Caco-2 (cell line): ENCODE measurements at regions of chr11 and their contacts with region 1.

Region 1: GRCh38 chr11:19101796-19102520 is 15.0 kb upstream of the ZDHHC13 start:
- DNase-seq: peak in 1 of 2 experiments; percentile 30
- H3K4me3 ChIP-seq: no peak overlapping the region; the same call in 1 of the 2 replicates
- H3K4me3 Mint-ChIP-seq: peak overlapping the region; percentile 39
- H3K27ac Mint-ChIP-seq: no peak overlapping the region
- H3K4me1 ChIP-seq: peaks cover 17% of the 10 kb centered on the region
- H3K4me1 Mint-ChIP-seq: peaks cover 24% of the 10 kb centered on the region
- H3K27me3 ChIP-seq: no peaks in the 10 kb centered on the region
- H3K27me3 Mint-ChIP-seq: peaks cover 2% of the 10 kb centered on the region
- CTCF ChIP-seq: no peak

Region 2: GRCh38 chr11:19076744-19077589 is 25.0 kb before region 1 on chr11:
- CTCF ChIA-PET with region 1: interaction called, 9 read pairs
- POLR2A ChIA-PET with region 1: no interaction called
- intact Hi-C with region 1: loop called (anchors 1 kb)
- DNase-seq: peak; percentile 52 to 78
- H3K4me3 ChIP-seq: no peak overlapping the region
- H3K4me3 Mint-ChIP-seq: no peak overlapping the region
- H3K27ac Mint-ChIP-seq: no peak overlapping the region
- H3K4me1 ChIP-seq: no peaks in the 10 kb centered on the region; the same call in 1 of the 2 replicates
- H3K4me1 Mint-ChIP-seq: peaks cover 14% of the 10 kb centered on the region
- H3K27me3 ChIP-seq: no peaks in the 10 kb centered on the region
- H3K27me3 Mint-ChIP-seq: no peaks in the 10 kb centered on the region
- CTCF ChIP-seq: peak; percentile 97 to 98

Region 3: GRCh38 chr11:19116971-19117750 is 15.2 kb after region 1 on chr11 and contains the start of gene ZDHHC13:
- CTCF ChIA-PET with region 1: no interaction called
- POLR2A ChIA-PET with region 1: no interaction called
- intact Hi-C with region 1: loop called (anchors 1 kb)
- DNase-seq: peak; percentile 98 to 99
- H3K4me3 ChIP-seq: peak within 1 kb of the TSS; percentile 83
- H3K4me3 Mint-ChIP-seq: peak within 1 kb of the TSS; percentile 92
- H3K27ac Mint-ChIP-seq: peak within 1 kb of the TSS; percentile 84
- H3K4me1 ChIP-seq: 0 out of 2 replicates have a peak, but pooled peaks cover 4% of the 10 kb centered on the region
- H3K4me1 Mint-ChIP-seq: peaks cover 13% of the 10 kb centered on the region
- H3K27me3 ChIP-seq: no peaks in the 10 kb centered on the region
- H3K27me3 Mint-ChIP-seq: no peaks in the 10 kb centered on the region
- CTCF ChIP-seq: peak; percentile 12 to 63
- total RNA-seq, gene ZDHHC13: 21.4 and 21.8 TPM in 2 replicates

Region 4: GRCh38 chr11:20000351-20001134 is 898.6 kb after region 1 on chr11:
- CTCF ChIA-PET with region 1: no interaction called
- POLR2A ChIA-PET with region 1: no interaction called
- intact Hi-C with region 1: no loop called
- DNase-seq: peak in 1 of 2 experiments; percentile 50
- H3K4me3 ChIP-seq: no peak overlapping the region
- H3K4me3 Mint-ChIP-seq: no peak overlapping the region
- H3K27ac Mint-ChIP-seq: peak overlapping the region; percentile 81
- H3K4me1 ChIP-seq: peaks cover 53% of the 10 kb centered on the region
- H3K4me1 Mint-ChIP-seq: peaks cover 43% of the 10 kb centered on the region
- H3K27me3 ChIP-seq: no peaks in the 10 kb centered on the region
- H3K27me3 Mint-ChIP-seq: no peaks in the 10 kb centered on the region
- CTCF ChIP-seq: peak in 1 of 2 experiments; percentile 19